GM10248 (cell line): ENCODE measurements at regions of chr2 and their contacts with region 1.

Region 1: DNA sequence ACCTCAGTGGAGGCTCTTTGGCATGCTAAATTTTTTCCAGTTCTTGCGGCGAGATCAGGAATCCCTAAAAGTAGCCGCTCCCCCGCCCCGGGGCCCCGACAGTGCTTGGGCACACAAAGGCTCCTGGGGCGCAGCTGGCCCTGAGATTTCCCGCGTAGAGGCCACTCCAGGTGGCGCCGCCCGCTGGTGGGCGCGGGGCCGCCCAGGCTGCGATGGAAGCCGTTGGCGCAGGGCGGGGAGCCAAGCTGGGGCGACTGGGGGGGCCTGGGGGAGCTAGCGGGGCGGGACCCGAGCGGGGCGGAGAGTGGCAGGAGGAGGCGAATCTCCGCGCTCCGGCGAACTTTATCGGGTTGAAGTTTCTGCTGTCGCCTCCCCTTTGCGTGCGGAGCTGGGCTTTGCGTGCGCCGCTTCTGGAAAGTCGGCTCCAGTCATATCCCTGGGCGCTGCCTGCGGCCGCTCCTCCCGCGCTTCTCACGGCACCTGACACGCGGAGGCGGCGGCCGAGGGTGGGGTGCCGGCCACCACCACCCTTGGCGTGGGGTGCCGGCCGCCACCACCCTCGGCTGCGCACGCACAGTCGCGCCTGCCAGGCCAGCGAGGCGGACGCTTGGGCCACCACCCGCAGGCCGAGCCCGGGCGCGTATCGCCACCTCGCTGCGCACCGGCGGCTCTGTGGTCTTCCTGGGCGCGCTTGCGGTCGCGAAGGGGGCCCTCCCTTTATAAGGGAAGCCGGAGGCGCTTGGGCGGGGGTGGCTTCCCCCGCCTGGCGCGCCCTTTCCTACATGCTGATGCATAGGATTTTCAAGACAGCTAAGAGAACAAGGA is 867 bp upstream of the CYP1B1 start:
- DNase-seq: peak; percentile 87
- CTCF ChIP-seq: peak; percentile 54

Region 2: GRCh38 chr2:38026846-38027245 is 50.0 kb before region 1 on chr2:
- CTCF ChIA-PET with region 1: no interaction called
- POLR2A ChIA-PET with region 1: no interaction called
- DNase-seq: no peak
- CTCF ChIP-seq: no peak

Region 3: GRCh38 chr2:38037757-38038621 is 38.8 kb before region 1 on chr2:
- CTCF ChIA-PET with region 1: interaction called, 10 read pairs
- POLR2A ChIA-PET with region 1: interaction called, 5 read pairs
- DNase-seq: peak; percentile 70
- CTCF ChIP-seq: peak; percentile 80

Region 4: GRCh38 chr2:38064801-38065501 is 11.9 kb before region 1 on chr2:
- CTCF ChIA-PET with region 1: interaction called, 11 read pairs
- POLR2A ChIA-PET with region 1: no interaction called
- DNase-seq: no peak
- CTCF ChIP-seq: no peak

Region 5: DNA sequence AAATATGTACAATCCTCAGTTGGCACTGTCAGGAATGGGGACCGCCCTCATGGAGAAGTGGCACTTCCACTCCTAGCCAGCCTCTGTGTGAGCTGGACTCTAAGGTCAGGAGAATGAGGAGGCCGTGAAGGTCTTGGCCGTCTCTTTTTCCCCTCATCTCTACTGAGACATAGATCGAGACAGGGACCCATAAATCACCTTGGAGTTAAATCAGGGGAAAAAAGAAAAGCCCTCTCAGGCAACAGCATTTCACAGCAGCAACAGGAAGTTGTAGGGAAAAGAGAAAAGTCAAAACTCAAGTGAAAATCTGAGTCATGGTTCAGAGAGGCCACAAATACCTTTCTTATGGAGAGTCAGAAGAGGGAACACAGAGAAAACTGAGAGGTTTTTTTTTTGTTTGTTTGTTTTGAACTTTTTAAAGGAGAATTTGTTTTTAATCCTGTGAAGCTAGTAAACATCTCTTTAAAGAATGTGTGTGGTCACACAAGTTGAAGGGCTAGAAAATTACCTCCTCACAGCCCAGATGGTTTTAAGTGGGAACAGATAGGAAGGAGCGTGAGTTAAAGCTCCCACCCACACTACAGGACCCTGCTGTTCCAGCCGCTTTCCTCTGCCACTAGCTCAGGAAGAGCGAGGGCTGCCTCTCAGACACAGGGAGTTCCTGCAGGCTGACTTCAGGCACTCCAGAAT is 29.7 kb after region 1 on chr2:
- CTCF ChIA-PET with region 1: interaction called, 11 read pairs
- POLR2A ChIA-PET with region 1: interaction called, 9 read pairs
- DNase-seq: no peak
- CTCF ChIP-seq: no peak

Region 6: DNA sequence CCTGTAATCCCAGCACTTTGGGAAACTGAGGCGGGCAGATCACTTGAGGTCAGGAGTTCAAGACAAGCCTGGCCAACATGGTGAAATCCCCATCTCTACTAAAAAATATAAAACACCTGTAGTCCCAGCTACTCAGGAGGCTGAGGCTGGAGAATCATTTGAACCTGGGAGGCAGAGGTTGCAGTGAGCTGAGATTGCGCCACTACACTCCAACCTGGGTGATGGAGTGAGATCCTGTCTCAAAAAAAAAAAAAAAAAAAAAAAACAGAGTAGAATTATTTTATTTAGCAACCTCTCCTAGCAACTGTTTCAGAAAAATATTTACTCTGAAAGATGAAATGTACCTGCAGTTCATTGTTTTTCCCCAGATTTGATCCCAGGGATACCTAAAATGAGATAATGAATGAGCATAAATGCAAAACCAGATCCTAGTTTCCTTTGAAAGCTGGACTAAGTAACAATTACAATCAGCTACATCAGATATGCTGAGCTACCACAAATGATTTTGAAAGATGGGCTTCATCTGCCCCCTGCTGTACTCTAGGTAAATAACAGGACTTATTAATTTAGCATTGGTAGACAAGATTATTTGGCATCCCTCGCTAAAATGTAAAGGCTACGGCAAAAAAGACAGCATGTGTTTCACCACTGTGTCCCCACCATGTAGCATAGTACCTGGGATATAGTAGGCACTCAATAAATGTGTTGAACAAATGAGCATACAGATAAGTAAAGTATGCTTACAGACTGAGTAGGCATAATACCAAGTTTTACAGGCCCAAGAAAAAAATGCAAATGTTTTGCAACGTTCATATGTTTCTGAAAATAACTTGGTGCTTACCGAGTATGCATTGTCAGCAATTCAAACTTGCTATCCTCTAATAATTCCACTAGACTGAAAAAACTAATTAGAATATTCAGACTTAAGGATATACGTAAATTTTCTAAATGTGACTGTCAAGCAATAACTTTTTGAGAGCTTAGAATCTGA is 197.8 kb after region 1 on chr2:
- CTCF ChIA-PET with region 1: interaction called, 26 read pairs
- POLR2A ChIA-PET with region 1: no interaction called
- DNase-seq: peak; percentile 65
- CTCF ChIP-seq: peak; percentile 65